Endothelial cell of umbilical vein (primary cell): ENCODE measurements at regions of chr19 and their contacts with region 1.

Region 1: GRCh38 chr19:49869441-49870176 is 2.2 kb upstream of the PNKP start:
- DNase-seq: peak; percentile 100
- H3K4me3 ChIP-seq: peak overlapping the region; percentile 18 to 53 (median 30)
- H3K27ac ChIP-seq: peak overlapping the region; percentile 3
- H3K4me1 ChIP-seq: peaks cover 26% of the 10 kb centered on the region
- H3K27me3 ChIP-seq: no peaks in the 10 kb centered on the region
- CTCF ChIP-seq: no peak
- POLR2A ChIP-seq: peak; percentile 90

Region 2: DNA sequence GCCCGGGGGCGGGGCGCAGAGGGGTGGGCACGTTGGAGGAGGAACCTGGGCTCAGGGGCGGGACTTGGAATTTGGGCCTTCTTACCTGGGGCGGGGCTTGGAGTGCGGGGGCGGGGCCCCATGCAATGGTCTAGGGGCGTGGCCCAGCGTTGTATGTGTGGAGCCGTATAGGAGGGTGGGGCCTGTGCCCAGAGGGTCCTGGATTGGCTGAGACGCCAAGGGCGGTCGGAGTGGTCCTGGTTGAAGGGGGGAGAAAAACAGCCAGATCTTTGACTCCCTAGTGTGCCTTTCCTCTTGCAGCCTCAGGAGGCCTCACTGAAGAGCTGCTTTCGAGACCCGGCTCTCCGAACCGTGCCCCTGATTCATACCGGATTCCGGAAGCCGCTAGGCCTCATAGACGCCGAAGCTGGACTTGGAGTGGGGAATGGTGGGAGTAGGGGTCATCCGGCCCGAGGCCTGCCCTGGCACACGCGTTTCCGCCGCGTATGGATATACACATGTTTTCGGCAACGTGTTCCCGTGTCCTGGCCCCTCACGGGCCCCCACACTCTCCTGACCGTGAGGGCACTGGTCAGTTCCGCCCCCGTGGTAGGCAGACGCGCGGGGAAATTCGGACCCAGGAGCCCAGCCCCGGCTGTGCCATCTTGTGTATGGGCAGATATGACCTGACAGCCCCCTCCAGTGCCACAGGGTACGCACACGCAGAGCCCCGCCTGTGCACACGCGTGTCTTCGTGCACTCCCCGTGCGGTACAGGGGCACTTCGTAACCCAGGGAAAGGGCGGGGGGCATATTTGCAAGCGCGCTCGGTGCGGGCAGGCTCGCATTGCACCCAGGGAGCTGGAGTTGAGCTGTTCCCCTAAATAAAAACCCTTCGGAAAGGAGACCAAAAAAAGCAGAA is 279.3 kb before region 1 on chr19:
- CTCF ChIA-PET with region 1: no interaction called
- POLR2A ChIA-PET with region 1: no interaction called
- dilution Hi-C with region 1: no loop called
- intact Hi-C with region 1: loop called (anchors 5 kb)
- DNase-seq: peak; percentile 96
- H3K4me3 ChIP-seq: peak overlapping the region; percentile 3 to 88 (median 45)
- H3K27ac ChIP-seq: peak overlapping the region; percentile 83
- H3K4me1 ChIP-seq: peaks cover 16% of the 10 kb centered on the region
- H3K27me3 ChIP-seq: no peaks in the 10 kb centered on the region
- CTCF ChIP-seq: peak in 1 of 2 donors; percentile 26
- POLR2A ChIP-seq: peak; percentile 85

Region 3: GRCh38 chr19:49817964-49818648 is 51.5 kb before region 1 on chr19 and contains the start of gene MED25:
- CTCF ChIA-PET with region 1: interaction called, 3 read pairs
- POLR2A ChIA-PET with region 1: no interaction called
- dilution Hi-C with region 1: no loop called
- intact Hi-C with region 1: loop called (anchors 1 kb)
- DNase-seq: peak; percentile 93
- H3K4me3 ChIP-seq: peak within 1 kb of the TSS; percentile 83 to 95 (median 90)
- H3K27ac ChIP-seq: peak within 1 kb of the TSS; percentile 89
- H3K4me1 ChIP-seq: peaks cover 19% of the 10 kb centered on the region
- H3K27me3 ChIP-seq: no peaks in the 10 kb centered on the region
- CTCF ChIP-seq: peak in 1 of 2 donors; percentile 14
- POLR2A ChIP-seq: peak; percentile 75
- total RNA-seq, gene MED25: 55.8 and 62.9 TPM in 2 replicates

Region 4: GRCh38 chr19:49850473-49851342 is 18.9 kb before region 1 on chr19 and contains the start of gene PTOV1:
- CTCF ChIA-PET with region 1: interaction called, 8 read pairs
- POLR2A ChIA-PET with region 1: interaction called, 6 read pairs
- dilution Hi-C with region 1: no loop called
- intact Hi-C with region 1: loop called (anchors 1 kb)
- DNase-seq: peak; percentile 91
- H3K4me3 ChIP-seq: peak within 1 kb of the TSS; percentile 15 to 67 (median 57)
- H3K27ac ChIP-seq: peak within 1 kb of the TSS; percentile 68
- H3K4me1 ChIP-seq: peaks cover 24% of the 10 kb centered on the region
- H3K27me3 ChIP-seq: no peaks in the 10 kb centered on the region
- CTCF ChIP-seq: no peak
- POLR2A ChIP-seq: peak; percentile 71
- total RNA-seq, gene PTOV1: 184 and 187 TPM in 2 replicates